Activated B cell treated with CpG ODN at 0.5 μM for 24 hours (primary cell): ENCODE measurements at regions of chr6 and their contacts with region 1.

Region 1: DNA sequence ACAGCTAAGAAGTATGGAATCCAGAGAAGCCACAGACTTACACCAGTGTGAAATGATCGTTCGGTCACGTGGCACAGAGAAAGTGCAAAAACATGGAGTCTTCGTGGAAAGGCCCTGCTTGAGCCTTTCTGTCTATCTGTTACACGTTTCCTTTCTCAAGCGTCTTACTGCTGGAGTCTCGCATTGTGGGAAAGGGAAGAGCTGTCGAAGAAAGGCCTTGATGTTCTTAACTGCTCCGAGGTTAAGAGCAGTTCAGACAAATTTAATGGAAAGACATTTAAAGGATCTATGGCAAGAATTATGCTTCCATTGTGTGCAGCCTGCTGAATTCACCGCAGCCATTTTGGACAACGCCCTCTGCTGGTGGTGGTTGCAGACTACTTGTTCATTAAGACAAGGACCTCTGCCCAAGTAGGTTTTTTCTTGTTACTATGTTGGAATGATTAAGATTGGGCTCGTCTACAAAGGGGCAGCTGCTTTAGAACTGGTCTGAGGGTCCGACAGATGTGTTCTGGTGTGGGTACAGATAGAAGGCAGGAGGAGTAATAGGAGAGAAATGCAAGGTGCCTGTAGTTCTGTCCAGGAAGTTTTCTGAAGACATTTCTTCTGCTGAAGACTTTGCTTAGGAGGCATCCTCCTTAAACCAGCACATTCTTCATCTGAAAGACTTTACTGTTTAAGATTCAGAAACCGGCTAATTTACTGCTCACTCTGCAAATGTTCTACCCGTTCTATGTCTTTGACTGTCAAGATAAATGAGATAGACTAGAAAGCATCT is 24.7 kb upstream of the CCN6 start:
- DNase-seq: peak; percentile 33
- ATAC-seq: no peak
- H3K4me3 Mint-ChIP-seq: no peak overlapping the region
- H3K27ac Mint-ChIP-seq: no peak overlapping the region
- H3K4me1 Mint-ChIP-seq: peaks cover 16% of the 10 kb centered on the region
- H3K27me3 Mint-ChIP-seq: peaks cover 3% of the 10 kb centered on the region
- CTCF ChIP-seq: peak; percentile 25

Region 2: DNA sequence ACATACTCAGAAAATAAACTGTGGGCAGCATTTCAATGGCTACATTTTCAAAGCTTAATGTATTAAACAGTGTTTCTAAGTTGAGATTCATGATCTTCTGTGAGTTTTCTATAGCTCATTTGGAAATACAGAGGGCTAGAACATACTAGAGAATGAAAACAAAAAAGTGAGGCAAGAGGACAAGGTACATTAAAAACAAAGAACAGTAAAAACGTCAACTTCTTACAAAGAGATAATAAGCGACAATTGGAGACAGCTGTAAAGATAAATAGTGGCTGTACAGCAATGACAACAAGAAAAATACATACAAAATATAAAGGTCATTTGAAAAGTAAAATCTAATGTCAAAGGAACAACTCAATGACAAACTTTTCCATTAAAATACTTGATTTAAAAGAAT is 640.6 kb before region 1 on chr6:
- CTCF ChIA-PET with region 1: no interaction called
- POLR2A ChIA-PET with region 1: no interaction called
- intact Hi-C with region 1: no loop called
- DNase-seq: no peak
- ATAC-seq: no peak
- H3K4me3 Mint-ChIP-seq: no peak overlapping the region
- H3K27ac Mint-ChIP-seq: no peak overlapping the region
- H3K4me1 Mint-ChIP-seq: peaks cover 3% of the 10 kb centered on the region
- H3K27me3 Mint-ChIP-seq: no peaks in the 10 kb centered on the region
- CTCF ChIP-seq: no peak

Region 3: GRCh38 chr6:111709615-111710398 is 319.4 kb before region 1 on chr6:
- CTCF ChIA-PET with region 1: interaction called, 24 read pairs
- POLR2A ChIA-PET with region 1: no interaction called
- intact Hi-C with region 1: loop called (anchors 1 kb)
- DNase-seq: no peak
- ATAC-seq: peak; percentile 97
- H3K4me3 Mint-ChIP-seq: peak overlapping the region; percentile 19
- H3K27ac Mint-ChIP-seq: no peak overlapping the region
- H3K4me1 Mint-ChIP-seq: peaks cover 4% of the 10 kb centered on the region
- H3K27me3 Mint-ChIP-seq: no peaks in the 10 kb centered on the region
- CTCF ChIP-seq: peak; percentile 44

Region 4: GRCh38 chr6:112049026-112049799 is 20.0 kb after region 1 on chr6:
- CTCF ChIA-PET with region 1: no interaction called
- POLR2A ChIA-PET with region 1: no interaction called
- intact Hi-C with region 1: no loop called
- DNase-seq: no peak
- ATAC-seq: no peak
- H3K4me3 Mint-ChIP-seq: no peak overlapping the region
- H3K27ac Mint-ChIP-seq: no peak overlapping the region
- H3K4me1 Mint-ChIP-seq: no peaks in the 10 kb centered on the region
- H3K27me3 Mint-ChIP-seq: no peaks in the 10 kb centered on the region
- CTCF ChIP-seq: no peak